ENCODE measurements at regions of chr2 and their contacts with region 1.

Region 1: DNA sequence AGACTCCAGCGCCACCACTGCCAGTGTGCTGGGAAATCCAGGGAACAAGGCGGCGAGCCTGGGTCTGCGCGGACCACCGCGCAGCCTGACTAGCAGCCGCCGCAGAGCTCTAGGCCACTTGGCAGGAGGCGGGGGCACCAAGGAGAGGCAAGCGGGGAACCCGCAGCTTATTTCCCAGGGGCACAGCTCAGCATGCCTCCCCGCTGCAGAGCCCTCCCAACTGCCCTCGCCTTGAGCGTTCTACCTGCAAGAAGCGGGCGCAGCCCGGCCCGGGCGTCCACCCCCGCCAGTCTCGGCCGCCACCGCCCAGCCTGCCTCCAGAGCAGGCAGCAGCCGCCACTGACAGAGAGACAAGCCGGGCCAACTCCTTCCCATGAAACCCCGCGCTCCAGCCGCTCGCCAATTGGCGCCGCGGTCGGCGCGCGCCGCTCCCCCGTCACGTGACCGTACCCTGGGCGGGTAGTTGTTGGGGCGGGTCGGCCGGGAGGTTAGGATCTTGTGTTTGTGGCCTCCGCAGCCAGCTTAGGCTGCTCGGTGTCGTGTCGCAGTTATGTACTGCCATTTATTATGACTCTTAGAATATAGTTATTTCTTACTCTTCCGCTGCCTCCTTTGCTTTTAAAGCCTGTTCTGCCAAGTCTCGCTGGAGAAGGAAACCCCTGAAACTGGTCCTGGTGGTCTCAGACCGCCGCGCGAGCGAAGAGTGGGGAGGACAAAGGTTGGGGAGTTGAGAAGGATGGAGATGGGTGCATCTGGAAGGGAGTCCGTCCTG is at the start of gene LNPK:
- DNase-seq: peak; percentile 90 to 92
- H3K4me3 ChIP-seq: peak within 1 kb of the TSS; percentile 75 to 81 (median 78)
- H3K27ac ChIP-seq: peak within 1 kb of the TSS; percentile 70 to 86
- H3K4me1 ChIP-seq: no peaks in the 10 kb centered on the region
- H3K27me3 ChIP-seq: no peaks in the 10 kb centered on the region
- CTCF ChIP-seq: no peak
- POLR2A ChIP-seq: peak; percentile 30
- total RNA-seq, gene LNPK: 20.0 to 30.3 (median 23.8) TPM

Region 2: GRCh38 chr2:175854665-175855064 is 147.4 kb before region 1 on chr2:
- intact Hi-C with region 1: loop called (anchors 5 kb)
- DNase-seq: no peak
- H3K4me3 ChIP-seq: no peak overlapping the region
- H3K27ac ChIP-seq: no peak overlapping the region
- H3K4me1 ChIP-seq: no peaks in the 10 kb centered on the region
- H3K27me3 ChIP-seq: no peaks in the 10 kb centered on the region
- CTCF ChIP-seq: no peak
- POLR2A ChIP-seq: no peak

Measured in breast epithelium (tissue), 4 donors.